ENCODE measurements at regions of chr12 and their contacts with region 1.

Region 1: DNA sequence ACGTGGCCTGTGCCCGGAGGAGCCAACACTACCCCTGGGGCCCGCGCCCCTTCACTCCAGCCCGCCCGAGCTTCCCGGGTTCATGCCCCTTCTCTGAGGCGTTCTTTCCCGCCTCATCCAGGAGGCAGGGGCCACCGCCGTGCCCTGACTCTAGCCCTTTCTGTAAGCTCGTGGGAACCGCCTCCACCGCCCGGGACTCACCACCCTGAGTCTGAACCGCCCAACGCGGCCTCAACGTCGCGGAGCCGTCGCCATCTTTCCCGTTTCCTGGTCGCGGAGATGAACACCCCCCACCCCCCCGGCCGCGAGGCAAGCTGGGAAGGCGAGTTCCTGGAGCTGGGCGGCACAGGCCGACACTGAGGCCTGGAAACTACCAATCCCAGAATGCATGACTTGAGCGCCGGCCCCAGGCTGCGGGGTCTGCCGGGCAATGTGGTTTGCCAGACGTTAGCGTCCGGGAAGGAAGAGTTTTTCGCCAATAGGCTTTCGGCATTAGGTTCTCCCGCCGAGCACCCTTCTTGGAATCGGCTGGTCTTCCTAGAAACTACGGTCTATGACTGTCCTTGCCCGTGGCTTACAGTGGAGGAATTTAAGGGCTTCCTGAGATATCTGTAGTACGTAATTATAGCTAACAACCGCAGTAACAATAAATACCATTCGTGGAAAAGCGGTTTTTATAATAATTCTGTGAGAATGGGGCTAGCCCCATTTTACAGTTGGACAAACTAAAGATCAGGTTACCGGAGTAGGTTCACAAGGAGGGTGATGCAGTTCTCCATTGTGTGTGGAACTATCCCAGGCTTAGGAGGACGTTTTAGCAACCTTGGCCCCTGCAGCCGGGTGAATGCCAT is at the start of gene DDX23:
- DNase-seq: peak; percentile 79 to 97 (median 90)
- ATAC-seq: peak; percentile 90
- H3K4me3 ChIP-seq: peak within 1 kb of the TSS; percentile 67 to 91
- H3K4me3 Mint-ChIP-seq: peak within 1 kb of the TSS; percentile 99
- H3K27ac ChIP-seq: peak within 1 kb of the TSS; percentile 92 to 96
- H3K27ac Mint-ChIP-seq: peak within 1 kb of the TSS; percentile 99
- H3K4me1 ChIP-seq: peaks cover 28% of the 10 kb centered on the region
- H3K4me1 Mint-ChIP-seq: peaks cover 42% of the 10 kb centered on the region
- H3K27me3 ChIP-seq: no peaks in the 10 kb centered on the region
- H3K27me3 Mint-ChIP-seq: no peaks in the 10 kb centered on the region
- CTCF ChIP-seq: no peak
- total RNA-seq, gene DDX23: 70.6 to 76.4 TPM

Region 2: DNA sequence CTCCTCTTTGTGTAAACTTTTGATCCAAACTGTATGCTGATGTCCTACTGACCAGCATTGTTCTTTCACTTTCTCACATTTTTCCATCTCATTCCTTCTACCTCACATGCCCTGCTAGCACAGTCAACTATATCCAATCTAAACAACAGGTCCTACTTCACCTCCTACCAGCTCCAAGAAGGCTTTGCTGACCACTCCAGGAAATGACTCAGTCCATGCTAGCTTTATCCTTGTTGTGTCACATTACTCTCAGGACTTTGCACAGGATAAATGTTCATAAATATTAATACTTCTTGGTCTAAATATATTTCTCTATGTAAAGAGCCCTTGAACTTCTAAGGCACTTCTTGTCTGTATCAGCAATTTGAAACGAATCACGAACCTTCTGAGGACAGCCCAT is 1837.6 kb before region 1 on chr12:
- CTCF ChIA-PET with region 1: no interaction called
- POLR2A ChIA-PET with region 1: no interaction called
- intact Hi-C with region 1: no loop called
- DNase-seq: no peak
- ATAC-seq: no peak
- H3K4me3 ChIP-seq: no peak overlapping the region
- H3K4me3 Mint-ChIP-seq: no peak overlapping the region
- H3K27ac ChIP-seq: no peak overlapping the region
- H3K27ac Mint-ChIP-seq: no peak overlapping the region
- H3K4me1 ChIP-seq: no peaks in the 10 kb centered on the region
- H3K4me1 Mint-ChIP-seq: no peaks in the 10 kb centered on the region
- H3K27me3 ChIP-seq: peaks cover 0 to 3% of the 10 kb centered on the region in 2 experiments
- H3K27me3 Mint-ChIP-seq: peaks cover 21% of the 10 kb centered on the region
- CTCF ChIP-seq: no peak

Region 3: GRCh38 chr12:48865434-48866290 is 13.6 kb after region 1 on chr12 and contains the start of gene RND1:
- CTCF ChIA-PET with region 1: interaction called, 66 read pairs
- POLR2A ChIA-PET with region 1: interaction called, 36 read pairs
- intact Hi-C with region 1: loop called (anchors 1 kb)
- DNase-seq: peak; percentile 58 to 96 (median 85)
- ATAC-seq: peak; percentile 95
- H3K4me3 ChIP-seq: peak within 1 kb of the TSS; percentile 56 to 74
- H3K4me3 Mint-ChIP-seq: peak within 1 kb of the TSS; percentile 93
- H3K27ac ChIP-seq: peak within 1 kb of the TSS; percentile 19 to 28
- H3K27ac Mint-ChIP-seq: peak within 1 kb of the TSS; percentile 84
- H3K4me1 ChIP-seq: peaks cover 15% of the 10 kb centered on the region
- H3K4me1 Mint-ChIP-seq: peaks cover 27% of the 10 kb centered on the region
- H3K27me3 ChIP-seq: peaks cover 7 to 16% of the 10 kb centered on the region in 2 experiments
- H3K27me3 Mint-ChIP-seq: peaks cover 30% of the 10 kb centered on the region
- CTCF ChIP-seq: no peak
- total RNA-seq, gene RND1: 11.9 to 12.9 TPM

Region 4: GRCh38 chr12:48903982-48904411 is 51.9 kb after region 1 on chr12:
- CTCF ChIA-PET with region 1: interaction called, 22 read pairs
- POLR2A ChIA-PET with region 1: interaction called, 5 read pairs
- intact Hi-C with region 1: no loop called
- DNase-seq: peak; percentile 68 to 93 (median 87)
- ATAC-seq: peak; percentile 99
- H3K4me3 ChIP-seq: peak overlapping the region; percentile 13 to 27
- H3K4me3 Mint-ChIP-seq: peak overlapping the region; percentile 79
- H3K27ac ChIP-seq: no peak overlapping the region
- H3K27ac Mint-ChIP-seq: no peak overlapping the region
- H3K4me1 ChIP-seq: peaks cover 4% of the 10 kb centered on the region
- H3K4me1 Mint-ChIP-seq: peaks cover 11% of the 10 kb centered on the region
- H3K27me3 ChIP-seq: no peaks in the 10 kb centered on the region
- H3K27me3 Mint-ChIP-seq: no peaks in the 10 kb centered on the region
- CTCF ChIP-seq: peak; percentile 79

Region 5: DNA sequence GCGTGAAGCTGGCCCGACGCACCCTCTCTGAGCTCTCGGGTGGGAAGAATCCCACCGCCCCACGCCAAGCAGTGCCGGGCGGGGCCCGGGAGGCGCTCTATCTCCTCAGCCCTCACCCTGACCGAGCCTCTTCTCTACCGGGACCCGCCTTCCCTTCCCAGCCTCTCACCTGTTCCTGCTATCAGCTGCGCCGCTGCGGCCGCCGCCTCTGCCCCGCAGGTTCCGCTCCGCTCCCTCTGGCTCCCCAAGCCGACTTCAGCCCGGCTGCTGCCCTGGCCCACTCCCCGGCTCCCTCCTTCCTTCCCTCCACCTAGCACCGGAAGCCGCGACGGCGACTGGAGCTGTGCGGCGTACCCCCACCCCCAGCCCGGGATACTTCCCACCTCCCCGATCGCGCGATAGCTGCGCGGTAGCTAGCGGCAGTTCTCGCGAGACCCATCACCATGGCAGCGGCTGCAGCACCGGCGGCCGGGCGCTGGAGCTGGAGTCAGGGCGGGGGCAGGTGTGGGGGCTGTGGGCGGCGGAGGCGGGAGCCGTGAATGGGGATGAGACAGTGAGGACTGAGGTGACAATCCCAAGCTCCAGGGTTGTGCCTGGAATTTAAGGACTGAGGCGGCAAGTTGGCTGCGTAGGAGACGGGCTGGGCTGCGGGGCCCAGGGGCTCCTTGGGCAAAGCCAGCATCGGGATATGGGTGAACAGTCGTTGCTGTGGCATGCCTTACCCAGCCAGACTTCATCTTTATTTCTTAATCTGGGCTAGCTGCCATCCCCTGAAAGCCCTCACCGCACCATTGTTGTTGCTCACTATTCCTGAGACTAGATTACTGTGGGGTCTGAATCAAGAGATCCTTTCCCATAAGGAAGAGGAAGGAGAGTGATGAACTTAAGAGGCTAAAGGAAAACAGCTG is 105.3 kb after region 1 on chr12 and contains the start of gene ARF3:
- CTCF ChIA-PET with region 1: interaction called, 16 read pairs
- POLR2A ChIA-PET with region 1: interaction called, 9 read pairs
- intact Hi-C with region 1: no loop called
- DNase-seq: peak; percentile 79 to 97 (median 92)
- ATAC-seq: peak; percentile 94
- H3K4me3 ChIP-seq: peak within 1 kb of the TSS; percentile 68 to 97
- H3K4me3 Mint-ChIP-seq: peak within 1 kb of the TSS; percentile 97
- H3K27ac ChIP-seq: peak within 1 kb of the TSS; percentile 50 to 71
- H3K27ac Mint-ChIP-seq: peak within 1 kb of the TSS; percentile 86
- H3K4me1 ChIP-seq: peaks cover 19% of the 10 kb centered on the region
- H3K4me1 Mint-ChIP-seq: peaks cover 42% of the 10 kb centered on the region
- H3K27me3 ChIP-seq: no peaks in the 10 kb centered on the region
- H3K27me3 Mint-ChIP-seq: peaks cover 8% of the 10 kb centered on the region
- CTCF ChIP-seq: no peak
- total RNA-seq, gene ARF3: 34.7 to 36.4 TPM

Region 6: GRCh38 chr12:49018261-49019119 is 166.4 kb after region 1 on chr12 and contains the start of gene PRKAG1:
- CTCF ChIA-PET with region 1: interaction called, 4 read pairs
- POLR2A ChIA-PET with region 1: no interaction called
- intact Hi-C with region 1: loop called (anchors 1 kb)
- DNase-seq: peak; percentile 95 to 99 (median 96)
- ATAC-seq: peak; percentile 90
- H3K4me3 ChIP-seq: peak within 1 kb of the TSS; percentile 82 to 85
- H3K4me3 Mint-ChIP-seq: peak within 1 kb of the TSS; percentile 95
- H3K27ac ChIP-seq: peak within 1 kb of the TSS; percentile 97 to 98
- H3K27ac Mint-ChIP-seq: peak within 1 kb of the TSS; percentile 99
- H3K4me1 ChIP-seq: peaks cover 25% of the 10 kb centered on the region
- H3K4me1 Mint-ChIP-seq: peaks cover 38% of the 10 kb centered on the region
- H3K27me3 ChIP-seq: no peaks in the 10 kb centered on the region
- H3K27me3 Mint-ChIP-seq: no peaks in the 10 kb centered on the region
- CTCF ChIP-seq: peak; percentile 61
- total RNA-seq, gene PRKAG1: 30.2 to 34.3 TPM

Region 7: DNA sequence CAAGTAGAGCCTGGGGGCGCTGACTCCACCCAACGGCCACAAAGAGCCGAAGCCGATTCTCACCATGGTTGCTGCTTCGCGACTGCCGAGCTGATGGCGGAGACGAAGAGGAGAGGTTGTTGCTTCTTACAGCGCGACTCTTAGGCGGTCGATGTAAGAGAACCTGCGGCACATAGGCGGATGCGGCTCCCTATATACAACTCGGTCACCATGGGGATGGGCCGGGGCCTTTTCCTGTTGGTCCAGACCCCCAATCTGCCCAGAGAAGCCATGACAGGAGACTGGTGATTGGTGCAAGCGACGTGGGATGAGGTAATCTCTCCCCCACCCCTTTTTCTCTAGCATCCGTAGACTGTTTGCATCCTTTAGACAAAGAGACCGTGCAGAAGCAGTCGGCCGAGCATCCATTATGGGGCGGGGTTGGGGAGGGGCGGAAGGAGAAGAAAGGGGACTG is 336.8 kb after region 1 on chr12 and contains the start of gene TUBA1A:
- CTCF ChIA-PET with region 1: no interaction called
- POLR2A ChIA-PET with region 1: no interaction called
- intact Hi-C with region 1: loop called in 1 of 2 experiments (anchors 2 kb)
- DNase-seq: peak; percentile 90 to 99 (median 96)
- ATAC-seq: peak; percentile 85
- H3K4me3 ChIP-seq: peak within 1 kb of the TSS; percentile 90 to 98
- H3K4me3 Mint-ChIP-seq: peak within 1 kb of the TSS; percentile 97
- H3K27ac ChIP-seq: peak within 1 kb of the TSS; percentile 100
- H3K27ac Mint-ChIP-seq: peak within 1 kb of the TSS; percentile 100
- H3K4me1 ChIP-seq: peaks cover 14% of the 10 kb centered on the region
- H3K4me1 Mint-ChIP-seq: peaks cover 14% of the 10 kb centered on the region
- H3K27me3 ChIP-seq: no peaks in the 10 kb centered on the region
- H3K27me3 Mint-ChIP-seq: no peaks in the 10 kb centered on the region
- CTCF ChIP-seq: no peak
- total RNA-seq, gene TUBA1A: 209 to 225 TPM

Region 8: GRCh38 chr12:50637870-50638481 is 1785.9 kb after region 1 on chr12:
- CTCF ChIA-PET with region 1: no interaction called
- POLR2A ChIA-PET with region 1: no interaction called
- intact Hi-C with region 1: no loop called
- DNase-seq: peak in 2 of 9 experiments; percentile 46 to 65
- ATAC-seq: peak; percentile 62
- H3K4me3 ChIP-seq: no peak overlapping the region
- H3K4me3 Mint-ChIP-seq: no peak overlapping the region
- H3K27ac ChIP-seq: no peak overlapping the region
- H3K27ac Mint-ChIP-seq: peak overlapping the region; percentile 82
- H3K4me1 ChIP-seq: peaks cover 5% of the 10 kb centered on the region
- H3K4me1 Mint-ChIP-seq: peaks cover 26% of the 10 kb centered on the region
- H3K27me3 ChIP-seq: no peaks in the 10 kb centered on the region
- H3K27me3 Mint-ChIP-seq: no peaks in the 10 kb centered on the region
- CTCF ChIP-seq: peak; percentile 80

Measured in CD8-positive, alpha-beta T cell (primary cell).